Activated CD4-positive, alpha-beta T cell treated with anti-CD3 and anti-CD28 coated beads, Interleukin-2, amount 10 ng/mL, durations not matched to agents 24 days and 14 days (primary cell): ENCODE measurements at regions of chr18 and their contacts with region 1.

Region 1: GRCh38 chr18:51197661-51198424 is at the start of gene MEX3C:
- DNase-seq: peak; percentile 100
- H3K4me3 Mint-ChIP-seq: peak within 1 kb of the TSS; percentile 94
- H3K27ac Mint-ChIP-seq: peak within 1 kb of the TSS; percentile 98
- H3K4me1 Mint-ChIP-seq: peaks cover 21% of the 10 kb centered on the region
- H3K27me3 Mint-ChIP-seq: no peaks in the 10 kb centered on the region
- total RNA-seq, gene MEX3C: 57.4 and 62.6 TPM in 2 replicates

Region 2: DNA sequence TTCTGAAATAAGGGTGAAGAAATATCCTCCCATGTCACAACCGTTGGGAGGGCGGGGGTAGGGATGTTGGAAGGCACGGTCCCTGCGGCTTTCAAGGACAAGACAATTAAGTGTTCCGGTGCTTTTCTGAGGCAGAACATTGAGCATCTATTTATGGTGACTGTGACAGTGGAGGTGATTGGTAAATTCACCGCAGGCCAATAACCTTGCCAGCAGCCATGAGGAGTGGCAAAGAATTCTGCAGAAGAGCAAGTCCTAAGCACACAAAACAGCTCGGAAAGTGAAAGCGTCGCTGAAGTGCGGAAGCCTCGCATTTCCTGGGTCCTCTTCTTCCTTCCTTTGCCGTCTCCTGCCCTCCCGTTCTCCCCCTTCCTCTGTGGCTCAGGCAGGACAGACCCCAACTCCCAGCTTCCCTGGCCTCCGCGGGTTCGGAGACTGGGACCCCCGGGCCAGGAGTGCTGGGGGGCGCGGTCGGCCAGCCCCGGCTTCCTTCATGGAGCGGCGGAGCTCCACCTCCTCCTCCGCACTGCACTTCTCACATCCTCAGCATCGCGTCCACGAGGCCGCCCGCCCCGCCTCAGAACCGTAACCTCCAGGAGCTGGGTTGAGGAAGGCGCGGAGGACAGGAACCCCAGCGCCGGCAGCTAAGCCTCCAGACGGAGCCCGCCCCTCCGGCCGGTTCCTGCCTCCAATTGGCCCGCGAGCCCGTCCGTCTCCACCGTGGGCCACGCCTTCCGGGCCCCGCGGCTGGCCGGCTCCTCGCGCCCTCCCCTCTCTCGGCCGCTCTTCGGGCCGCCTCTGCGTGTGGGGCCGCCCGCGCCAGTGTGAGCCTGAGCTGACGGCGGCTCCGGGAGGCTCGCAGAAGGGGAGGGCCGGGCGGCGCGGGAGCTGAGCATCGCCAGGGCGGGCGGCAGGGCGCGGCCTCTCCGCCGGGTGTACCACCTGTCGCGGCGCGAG is 319.2 kb before region 1 on chr18 and contains the start of gene ME2:
- intact Hi-C with region 1: loop called (anchors 1 kb)
- DNase-seq: peak; percentile 98
- H3K4me3 Mint-ChIP-seq: peak within 1 kb of the TSS; percentile 95
- H3K27ac Mint-ChIP-seq: peak within 1 kb of the TSS; percentile 99
- H3K4me1 Mint-ChIP-seq: peaks cover 24% of the 10 kb centered on the region
- H3K27me3 Mint-ChIP-seq: peaks cover 4% of the 10 kb centered on the region
- total RNA-seq, gene ME2: 141 and 143 TPM in 2 replicates

Region 3: DNA sequence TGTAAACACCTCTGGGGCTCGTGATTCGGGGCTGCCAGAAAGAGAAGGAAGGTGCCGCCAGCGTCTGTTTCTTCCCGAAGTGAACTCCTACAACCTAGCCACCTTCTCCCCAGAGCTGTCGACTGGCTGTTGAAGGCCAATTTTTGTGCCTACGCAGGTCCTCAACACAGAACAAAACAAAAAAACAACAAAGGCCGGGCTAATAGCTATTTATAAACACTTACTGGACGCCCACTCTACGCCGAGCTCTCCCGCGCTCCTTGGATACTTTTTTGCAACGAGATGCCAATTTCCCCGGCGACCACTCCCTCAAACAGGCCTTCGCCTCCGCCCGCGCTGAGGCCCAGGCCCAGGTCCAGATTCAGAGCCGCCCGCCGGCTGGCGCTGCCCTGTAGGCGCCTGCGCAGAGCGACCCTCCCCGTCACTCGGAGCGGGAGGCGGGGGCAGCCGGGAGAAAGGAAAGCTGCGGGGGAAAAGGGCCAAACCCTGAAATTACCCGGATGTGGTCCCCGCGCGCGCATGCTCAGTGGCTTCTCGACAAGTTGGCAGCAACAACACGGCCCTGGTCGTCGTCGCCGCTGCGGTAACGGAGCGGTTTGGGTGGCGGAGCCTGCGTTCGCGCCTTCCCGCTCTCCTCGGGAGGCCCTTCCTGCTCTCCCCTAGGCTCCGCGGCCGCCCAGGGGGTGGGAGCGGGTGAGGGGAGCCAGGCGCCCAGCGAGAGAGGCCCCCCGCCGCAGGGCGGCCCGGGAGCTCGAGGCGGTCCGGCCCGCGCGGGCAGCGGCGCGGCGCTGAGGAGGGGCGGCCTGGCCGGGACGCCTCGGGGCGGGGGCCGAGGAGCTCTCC is 167.9 kb before region 1 on chr18 and contains the start of gene SMAD4:
- intact Hi-C with region 1: loop called (anchors 2 kb)
- DNase-seq: peak; percentile 99
- H3K4me3 Mint-ChIP-seq: peak within 1 kb of the TSS; percentile 97
- H3K27ac Mint-ChIP-seq: peak within 1 kb of the TSS; percentile 99
- H3K4me1 Mint-ChIP-seq: peaks cover 44% of the 10 kb centered on the region
- H3K27me3 Mint-ChIP-seq: no peaks in the 10 kb centered on the region
- total RNA-seq, gene SMAD4: 76.5 and 90.8 TPM in 2 replicates

Region 4: DNA sequence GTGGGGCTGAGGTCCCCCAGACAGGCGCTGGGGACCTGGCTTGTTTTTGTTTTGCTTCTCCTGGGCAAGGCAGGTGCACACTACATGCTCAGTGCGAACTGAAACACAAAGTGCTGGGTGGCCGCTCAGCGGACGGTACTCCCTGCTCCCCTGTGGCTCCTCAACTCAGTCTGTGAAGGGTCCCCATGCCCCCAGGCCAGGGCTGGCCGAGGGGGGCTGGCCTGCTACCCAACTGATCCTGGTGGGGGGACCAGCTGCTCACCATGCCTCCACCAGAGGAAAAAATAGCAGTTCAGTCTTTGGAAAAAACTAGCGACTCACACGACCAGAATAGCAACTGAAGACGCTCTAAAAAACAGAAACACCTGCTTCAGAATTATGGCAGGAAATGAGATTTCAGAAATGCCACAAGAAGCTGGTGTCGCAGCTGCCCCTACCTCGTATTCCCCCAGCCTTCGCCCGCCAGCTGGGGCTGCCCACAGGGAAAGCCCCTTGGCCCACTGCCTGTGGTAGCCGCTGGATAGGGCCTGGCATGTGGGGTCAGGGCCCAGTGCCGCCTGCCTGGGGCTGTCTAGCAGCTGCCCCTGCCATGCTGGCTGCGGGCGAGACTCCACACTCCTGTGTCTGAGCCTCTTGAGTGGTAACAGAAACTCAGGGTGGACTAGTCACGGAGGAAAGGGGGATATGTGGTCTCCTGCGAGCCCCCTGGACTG is 44.0 kb before region 1 on chr18:
- intact Hi-C with region 1: loop called (anchors 1 kb)
- DNase-seq: peak; percentile 86
- H3K4me3 Mint-ChIP-seq: peak overlapping the region; percentile 80
- H3K27ac Mint-ChIP-seq: peak overlapping the region; percentile 99
- H3K4me1 Mint-ChIP-seq: peaks cover 45% of the 10 kb centered on the region
- H3K27me3 Mint-ChIP-seq: no peaks in the 10 kb centered on the region

Region 5: GRCh38 chr18:51211552-51211951 is 13.7 kb after region 1 on chr18:
- intact Hi-C with region 1: loop called (anchors 1 kb)
- DNase-seq: peak; percentile 87
- H3K4me3 Mint-ChIP-seq: no peak overlapping the region
- H3K27ac Mint-ChIP-seq: peak overlapping the region; percentile 44
- H3K4me1 Mint-ChIP-seq: peaks cover 19% of the 10 kb centered on the region
- H3K27me3 Mint-ChIP-seq: no peaks in the 10 kb centered on the region